ENCODE measurements at regions of chr6 and their contacts with region 1.

Region 1: DNA sequence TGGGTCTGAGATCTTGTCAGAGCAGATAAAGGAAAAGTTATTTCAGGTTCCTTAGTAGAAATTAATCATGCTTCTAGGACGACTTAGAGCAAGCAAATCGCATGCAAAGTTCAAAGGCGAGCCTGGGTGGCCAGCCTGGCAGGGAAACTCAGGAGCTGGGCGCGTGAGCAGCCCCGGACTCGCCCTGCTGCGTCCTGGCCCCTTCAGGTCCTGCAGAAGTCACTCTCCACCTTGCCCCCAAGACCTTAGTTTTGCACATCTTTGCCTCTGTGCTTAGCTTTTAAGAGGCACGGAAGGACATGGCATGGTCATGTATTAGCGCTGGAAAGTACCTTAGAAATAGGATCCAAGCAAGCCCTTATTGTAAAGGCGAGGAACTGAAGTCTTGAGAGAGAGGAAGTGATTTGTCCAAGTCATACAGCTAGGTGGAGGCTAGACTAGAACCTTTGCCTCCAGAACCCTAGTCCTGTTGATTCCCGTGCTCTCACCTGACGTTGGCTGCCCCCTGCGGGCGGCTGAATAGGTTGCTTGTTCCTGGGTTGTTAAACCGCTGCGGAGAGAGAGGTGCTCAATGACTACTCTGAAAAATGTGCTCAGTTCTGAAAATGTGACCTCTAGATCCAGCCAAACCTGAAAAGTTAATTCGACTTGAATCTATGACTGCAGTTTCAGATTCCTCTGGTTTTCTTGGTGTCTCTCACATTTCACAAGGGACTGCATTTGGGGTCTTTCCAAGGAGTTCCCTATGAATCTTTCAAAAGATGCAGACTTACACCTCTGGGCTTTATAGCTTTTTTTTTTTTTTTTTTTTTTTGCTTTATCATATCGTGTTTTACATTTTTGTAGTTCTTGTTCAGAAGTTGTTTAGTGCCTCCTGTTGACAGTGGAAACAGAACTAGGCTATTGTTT is 2.7 kb downstream of the MYB start:
- DNase-seq: peak; percentile 93
- ATAC-seq: peak; percentile 45
- H3K4me3 Mint-ChIP-seq: peak overlapping the region; percentile 99
- H3K27ac Mint-ChIP-seq: peak overlapping the region; percentile 97
- H3K4me1 Mint-ChIP-seq: peaks cover 33% of the 10 kb centered on the region
- H3K27me3 Mint-ChIP-seq: no peaks in the 10 kb centered on the region
- CTCF ChIP-seq: peak; percentile 83

Region 2: GRCh38 chr6:135054569-135055498 is 129.0 kb before region 1 on chr6 and contains the start of gene HBS1L:
- CTCF ChIA-PET with region 1: interaction called, 14 read pairs
- POLR2A ChIA-PET with region 1: interaction called, 10 read pairs
- intact Hi-C with region 1: loop called (anchors 2 kb)
- DNase-seq: peak; percentile 98
- ATAC-seq: peak; percentile 97
- H3K4me3 Mint-ChIP-seq: peak within 1 kb of the TSS; percentile 96
- H3K27ac Mint-ChIP-seq: peak within 1 kb of the TSS; percentile 99
- H3K4me1 Mint-ChIP-seq: peaks cover 25% of the 10 kb centered on the region
- H3K27me3 Mint-ChIP-seq: no peaks in the 10 kb centered on the region
- CTCF ChIP-seq: no peak
- total RNA-seq, gene HBS1L: 146 to 147 TPM

Region 3: DNA sequence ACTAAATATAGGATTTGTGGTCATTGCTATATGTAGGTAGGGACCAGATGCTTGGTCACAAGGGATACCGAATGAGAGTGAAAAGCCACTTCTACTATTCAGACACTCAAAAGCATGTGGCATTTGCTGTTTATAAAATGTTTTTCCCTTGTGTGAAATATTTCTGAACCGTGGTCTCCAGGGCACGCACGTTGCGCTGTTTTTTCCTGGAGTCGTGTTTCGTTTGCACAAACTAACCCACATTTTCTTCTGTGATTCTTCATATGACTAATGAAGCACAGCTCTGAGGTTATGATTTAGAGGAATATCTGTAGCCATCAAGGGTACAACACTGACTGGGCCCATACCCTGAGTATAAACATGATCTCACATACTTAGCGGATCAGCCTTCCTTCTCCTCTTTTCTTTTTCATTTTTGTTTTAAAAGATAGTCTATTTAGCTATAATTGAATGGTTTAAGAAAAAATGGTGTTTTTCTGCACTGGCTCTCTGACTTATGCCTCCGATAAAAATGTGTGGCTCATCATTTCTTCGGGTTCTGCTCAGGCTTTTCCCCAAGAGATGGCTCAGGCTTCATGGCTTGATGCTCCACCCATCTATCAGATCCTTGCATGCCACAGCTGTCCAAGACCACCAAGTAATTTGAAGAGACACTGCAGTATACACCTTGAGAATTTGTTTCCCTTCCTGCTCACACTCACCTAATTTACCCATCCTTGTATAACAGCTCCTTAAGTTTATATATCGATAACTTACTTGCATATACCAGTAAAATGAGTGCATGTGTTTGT is 69.2 kb before region 1 on chr6:
- CTCF ChIA-PET with region 1: interaction called, 8 read pairs
- POLR2A ChIA-PET with region 1: interaction called, 54 read pairs
- intact Hi-C with region 1: no loop called
- DNase-seq: peak; percentile 84
- ATAC-seq: peak; percentile 72
- H3K4me3 Mint-ChIP-seq: peak overlapping the region; percentile 7
- H3K27ac Mint-ChIP-seq: peak overlapping the region; percentile 91
- H3K4me1 Mint-ChIP-seq: peaks cover 79% of the 10 kb centered on the region
- H3K27me3 Mint-ChIP-seq: no peaks in the 10 kb centered on the region
- CTCF ChIP-seq: no peak

Region 4: DNA sequence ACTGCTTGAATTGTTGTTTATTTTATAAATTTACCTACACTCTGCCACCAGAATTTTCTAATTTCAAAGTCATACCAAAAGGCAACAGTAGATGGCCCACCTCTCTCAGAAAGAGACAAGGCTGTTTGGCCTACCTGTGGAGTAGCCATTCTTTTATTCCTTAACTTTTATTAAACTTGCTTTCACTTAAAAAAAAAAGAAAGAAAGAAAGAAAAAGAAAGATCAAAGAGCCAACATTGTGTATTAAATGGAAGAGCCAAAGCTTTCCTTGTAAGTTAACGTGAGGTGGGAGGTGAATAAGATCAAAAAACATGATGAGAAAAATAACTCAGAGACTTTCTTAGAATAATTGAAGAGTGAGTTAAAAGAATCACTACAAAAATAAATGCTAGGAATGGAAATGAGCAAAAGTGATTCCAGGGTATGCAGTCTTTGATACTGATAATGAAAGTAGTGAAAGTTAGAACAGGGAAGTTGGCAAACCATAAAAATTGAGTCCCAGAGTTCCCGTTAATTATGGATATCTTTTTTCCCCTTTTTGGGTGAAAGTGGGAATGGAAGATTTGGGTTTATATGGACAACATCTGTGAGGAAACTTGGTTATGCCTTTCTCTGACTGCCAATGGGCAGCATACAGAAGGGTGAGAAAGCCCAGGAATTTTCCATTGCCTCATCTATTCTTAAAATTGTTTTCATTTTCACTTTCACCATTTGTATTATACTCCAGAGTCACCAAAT is 38.6 kb before region 1 on chr6:
- CTCF ChIA-PET with region 1: interaction called, 67 read pairs
- POLR2A ChIA-PET with region 1: interaction called, 42 read pairs
- intact Hi-C with region 1: loop called (anchors 1 kb)
- DNase-seq: peak; percentile 45
- ATAC-seq: peak; percentile 62
- H3K4me3 Mint-ChIP-seq: peak overlapping the region; percentile 27
- H3K27ac Mint-ChIP-seq: peak overlapping the region; percentile 95
- H3K4me1 Mint-ChIP-seq: peaks cover 76% of the 10 kb centered on the region
- H3K27me3 Mint-ChIP-seq: no peaks in the 10 kb centered on the region
- CTCF ChIP-seq: peak; percentile 90

Region 5: DNA sequence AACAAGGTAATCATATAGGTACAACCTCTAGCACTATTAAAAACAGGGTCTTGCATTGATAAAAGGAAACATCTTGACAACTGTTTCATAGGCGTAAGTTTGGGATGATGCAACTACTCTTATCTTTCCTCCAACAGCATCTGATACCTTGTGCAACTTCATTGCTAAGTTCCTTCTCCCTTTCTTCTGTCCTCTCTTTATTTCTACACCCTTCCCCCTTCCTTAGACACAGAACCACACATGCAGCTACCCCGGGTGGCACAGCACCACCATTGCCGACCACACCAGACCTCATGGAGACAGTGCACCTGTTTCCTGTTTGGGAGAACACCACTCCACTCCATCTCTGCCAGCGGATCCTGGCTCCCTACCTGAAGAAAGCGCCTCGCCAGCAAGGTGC is 11.7 kb after region 1 on chr6:
- CTCF ChIA-PET with region 1: interaction called, 10 read pairs
- POLR2A ChIA-PET with region 1: interaction called, 27 read pairs
- intact Hi-C with region 1: no loop called
- DNase-seq: no peak
- ATAC-seq: no peak
- H3K4me3 Mint-ChIP-seq: no peak overlapping the region
- H3K27ac Mint-ChIP-seq: peak overlapping the region; percentile 39
- H3K4me1 Mint-ChIP-seq: peaks cover 32% of the 10 kb centered on the region
- H3K27me3 Mint-ChIP-seq: no peaks in the 10 kb centered on the region
- CTCF ChIP-seq: no peak

Region 6: GRCh38 chr6:135306740-135307420 is 123.1 kb after region 1 on chr6:
- CTCF ChIA-PET with region 1: no interaction called
- POLR2A ChIA-PET with region 1: no interaction called
- intact Hi-C with region 1: no loop called
- DNase-seq: no peak
- ATAC-seq: no peak
- H3K4me3 Mint-ChIP-seq: no peak overlapping the region
- H3K27ac Mint-ChIP-seq: no peak overlapping the region
- H3K4me1 Mint-ChIP-seq: peaks cover 4% of the 10 kb centered on the region
- H3K27me3 Mint-ChIP-seq: no peaks in the 10 kb centered on the region
- CTCF ChIP-seq: no peak

Measured in activated CD8-positive, alpha-beta T cell treated with anti-CD3 and anti-CD28 coated beads for 36 hours (primary cell).